ENCODE measurements at regions of chr5 and their contacts with region 1.

Region 1: DNA sequence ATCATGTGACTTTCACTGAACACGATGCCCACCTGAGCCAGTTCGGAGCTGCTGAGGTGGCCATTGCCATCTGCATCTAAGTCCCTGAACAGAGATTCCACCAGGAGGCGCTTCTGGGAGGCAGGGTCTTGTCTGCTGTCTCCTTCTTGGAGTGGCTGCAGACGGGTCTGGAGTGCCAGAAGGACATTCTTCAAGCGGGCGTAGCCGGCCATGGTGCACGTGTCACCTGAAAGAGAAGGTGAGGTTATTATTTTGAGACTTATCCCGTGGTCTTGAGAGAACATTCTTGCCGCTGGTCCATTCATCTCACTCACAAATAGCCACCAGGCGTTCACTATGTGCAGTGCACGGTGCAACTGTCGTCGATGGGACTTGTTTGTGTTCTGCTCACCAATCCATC is 264.6 kb downstream of the HSPA4 start:
- DNase-seq: no peak
- H3K4me3 ChIP-seq: no peak overlapping the region
- H3K27ac ChIP-seq: no peak overlapping the region
- H3K4me1 ChIP-seq: no peaks in the 10 kb centered on the region
- H3K27me3 ChIP-seq: no peaks in the 10 kb centered on the region
- CTCF ChIP-seq: no peak
- POLR2A ChIP-seq: no peak

Region 2: GRCh38 chr5:133287500-133287899 is 28.9 kb before region 1 on chr5:
- intact Hi-C with region 1: no loop called
- DNase-seq: no peak
- H3K4me3 ChIP-seq: no peak overlapping the region
- H3K27ac ChIP-seq: no peak overlapping the region
- H3K4me1 ChIP-seq: no peaks in the 10 kb centered on the region
- H3K27me3 ChIP-seq: no peaks in the 10 kb centered on the region
- CTCF ChIP-seq: peak in 1 of 3 donors; percentile 32
- POLR2A ChIP-seq: no peak

Region 3: DNA sequence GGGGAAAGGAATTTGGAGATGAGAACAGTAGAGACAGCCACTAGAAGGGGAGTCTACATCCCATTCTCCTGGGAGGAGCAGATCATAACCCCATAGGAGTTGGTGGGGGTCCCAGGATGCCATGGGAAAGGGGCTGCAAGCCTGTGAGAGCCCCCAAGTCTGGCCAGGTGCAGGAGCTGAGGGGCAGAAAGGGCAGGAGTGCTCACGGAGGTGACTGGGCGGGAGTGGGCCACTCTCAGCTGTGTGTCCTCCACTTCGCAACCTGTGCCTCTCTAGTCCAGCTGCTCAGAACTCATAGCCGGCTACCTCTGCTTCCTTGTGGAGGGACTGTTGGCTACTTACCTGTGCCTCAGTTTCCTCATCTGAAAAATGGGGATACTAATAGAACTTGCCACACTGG is 32.0 kb after region 1 on chr5:
- intact Hi-C with region 1: loop called (anchors 1 kb)
- DNase-seq: no peak
- H3K4me3 ChIP-seq: no peak overlapping the region
- H3K27ac ChIP-seq: no peak overlapping the region
- H3K4me1 ChIP-seq: no peaks in the 10 kb centered on the region
- H3K27me3 ChIP-seq: no peaks in the 10 kb centered on the region
- CTCF ChIP-seq: no peak
- POLR2A ChIP-seq: no peak